ENCODE measurements at regions of chrX and their contacts with region 1.

Region 1: DNA sequence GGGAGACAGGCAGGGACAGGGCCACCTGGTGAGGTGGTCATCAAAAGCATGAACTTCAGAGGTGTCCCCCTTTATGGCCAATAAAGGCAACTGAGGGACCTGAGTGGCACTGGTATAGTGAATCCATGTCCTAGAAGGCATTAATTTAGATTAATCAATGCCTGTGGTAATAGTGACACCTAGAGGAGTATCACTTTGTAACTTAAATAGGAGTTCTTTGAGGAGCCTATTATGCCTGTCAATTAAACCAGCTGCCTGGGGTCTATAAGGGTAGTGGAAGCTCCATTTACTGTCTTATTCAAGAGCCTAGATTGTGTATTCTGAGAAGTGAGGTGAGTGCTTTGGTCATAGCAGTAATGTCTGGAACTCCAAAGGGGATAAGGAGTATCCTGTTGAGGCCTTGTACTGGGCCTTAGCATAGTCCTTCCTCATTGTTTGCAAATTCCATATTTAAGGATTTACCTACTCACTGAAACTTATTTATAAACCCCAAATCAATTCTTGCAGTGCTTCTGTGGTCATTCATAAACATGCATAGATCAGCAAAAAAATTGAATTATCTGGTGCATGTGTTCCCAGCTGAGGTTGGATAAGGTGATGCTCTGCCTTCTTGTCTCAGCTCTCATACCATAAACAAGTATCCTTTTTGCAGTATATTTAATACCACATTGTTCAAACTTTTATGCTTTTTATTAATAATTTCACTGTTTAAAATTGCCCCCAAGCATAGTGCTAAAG is 213.8 kb upstream of the RADX start:
- DNase-seq: no peak
- ATAC-seq: no peak
- H3K4me3 ChIP-seq: no peak overlapping the region
- H3K27ac ChIP-seq: no peak overlapping the region
- H3K4me1 ChIP-seq: peaks cover 6% of the 10 kb centered on the region; the same call in 1 of the 2 replicates
- H3K27me3 ChIP-seq: no peaks in the 10 kb centered on the region
- CTCF ChIP-seq: peak; percentile 25; the same call in 1 of the 2 replicates
- EP300 ChIP-seq: no peak
- POLR2A ChIP-seq: no peak
- RAD21 ChIP-seq: no peak

Region 2: DNA sequence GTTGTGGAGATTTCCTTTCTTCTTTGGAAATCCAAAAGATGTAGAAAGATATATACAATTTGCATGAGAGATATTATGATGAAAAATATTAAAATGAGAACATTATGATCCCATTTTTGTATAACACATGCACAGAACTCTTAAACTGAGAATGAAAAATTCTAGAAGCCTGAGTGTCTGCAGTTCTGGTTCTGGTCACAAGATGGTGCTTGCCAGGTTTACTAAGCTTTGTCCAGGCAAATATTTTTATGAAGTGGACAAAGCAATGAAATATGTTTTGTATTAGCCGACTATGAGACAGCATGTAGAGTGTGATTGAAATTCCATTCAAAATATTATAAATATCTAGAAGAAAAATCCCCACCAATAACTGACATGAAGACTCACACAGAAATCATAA is 227.7 kb before region 1 on chrX:
- CTCF ChIA-PET with region 1: no interaction called
- POLR2A ChIA-PET with region 1: no interaction called
- in situ Hi-C with region 1: loop called (anchors 10 kb)
- intact Hi-C with region 1: no loop called
- DNase-seq: no peak
- ATAC-seq: no peak
- H3K4me3 ChIP-seq: no peak overlapping the region
- H3K27ac ChIP-seq: no peak overlapping the region
- H3K4me1 ChIP-seq: no peaks in the 10 kb centered on the region
- H3K27me3 ChIP-seq: no peaks in the 10 kb centered on the region
- CTCF ChIP-seq: peak; percentile 20; the same call in 1 of the 2 replicates
- EP300 ChIP-seq: no peak
- POLR2A ChIP-seq: no peak
- RAD21 ChIP-seq: no peak

Region 3: DNA sequence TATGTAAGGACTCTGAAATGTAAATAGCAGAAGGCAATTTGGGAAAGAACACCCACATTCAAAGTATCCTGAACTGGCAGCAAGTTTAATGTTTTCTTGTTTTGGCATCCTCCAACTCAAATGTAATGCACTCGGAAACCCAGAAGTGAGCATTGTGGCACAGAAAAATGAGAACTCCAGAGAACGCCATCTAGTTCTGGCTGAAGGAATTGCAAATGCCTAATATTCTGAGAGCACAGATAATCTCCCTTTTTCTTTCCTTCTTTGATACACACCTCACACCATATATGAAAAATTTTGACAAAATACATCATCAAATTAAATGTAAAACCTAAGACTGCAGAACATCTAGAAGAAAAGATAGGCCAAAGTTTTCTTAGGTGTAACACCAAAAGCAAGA is 177.8 kb before region 1 on chrX:
- CTCF ChIA-PET with region 1: no interaction called
- POLR2A ChIA-PET with region 1: no interaction called
- in situ Hi-C with region 1: no loop called
- intact Hi-C with region 1: no loop called
- DNase-seq: no peak
- ATAC-seq: no peak
- H3K4me3 ChIP-seq: no peak overlapping the region
- H3K27ac ChIP-seq: no peak overlapping the region
- H3K4me1 ChIP-seq: no peaks in the 10 kb centered on the region
- H3K27me3 ChIP-seq: no peaks in the 10 kb centered on the region
- CTCF ChIP-seq: peak; percentile 49
- EP300 ChIP-seq: no peak
- POLR2A ChIP-seq: no peak
- RAD21 ChIP-seq: no peak

Region 4: GRCh38 chrX:106415276-106415895 is 17.4 kb after region 1 on chrX:
- CTCF ChIA-PET with region 1: no interaction called
- POLR2A ChIA-PET with region 1: no interaction called
- in situ Hi-C with region 1: no loop called
- intact Hi-C with region 1: no loop called
- DNase-seq: peak; percentile 5
- ATAC-seq: no peak
- H3K4me3 ChIP-seq: no peak overlapping the region
- H3K27ac ChIP-seq: no peak overlapping the region
- H3K4me1 ChIP-seq: no peaks in the 10 kb centered on the region
- H3K27me3 ChIP-seq: no peaks in the 10 kb centered on the region
- CTCF ChIP-seq: peak; percentile 55
- EP300 ChIP-seq: no peak
- POLR2A ChIP-seq: no peak
- RAD21 ChIP-seq: no peak